ENCODE measurements at regions of chr7 and their contacts with region 1.

Region 1: DNA sequence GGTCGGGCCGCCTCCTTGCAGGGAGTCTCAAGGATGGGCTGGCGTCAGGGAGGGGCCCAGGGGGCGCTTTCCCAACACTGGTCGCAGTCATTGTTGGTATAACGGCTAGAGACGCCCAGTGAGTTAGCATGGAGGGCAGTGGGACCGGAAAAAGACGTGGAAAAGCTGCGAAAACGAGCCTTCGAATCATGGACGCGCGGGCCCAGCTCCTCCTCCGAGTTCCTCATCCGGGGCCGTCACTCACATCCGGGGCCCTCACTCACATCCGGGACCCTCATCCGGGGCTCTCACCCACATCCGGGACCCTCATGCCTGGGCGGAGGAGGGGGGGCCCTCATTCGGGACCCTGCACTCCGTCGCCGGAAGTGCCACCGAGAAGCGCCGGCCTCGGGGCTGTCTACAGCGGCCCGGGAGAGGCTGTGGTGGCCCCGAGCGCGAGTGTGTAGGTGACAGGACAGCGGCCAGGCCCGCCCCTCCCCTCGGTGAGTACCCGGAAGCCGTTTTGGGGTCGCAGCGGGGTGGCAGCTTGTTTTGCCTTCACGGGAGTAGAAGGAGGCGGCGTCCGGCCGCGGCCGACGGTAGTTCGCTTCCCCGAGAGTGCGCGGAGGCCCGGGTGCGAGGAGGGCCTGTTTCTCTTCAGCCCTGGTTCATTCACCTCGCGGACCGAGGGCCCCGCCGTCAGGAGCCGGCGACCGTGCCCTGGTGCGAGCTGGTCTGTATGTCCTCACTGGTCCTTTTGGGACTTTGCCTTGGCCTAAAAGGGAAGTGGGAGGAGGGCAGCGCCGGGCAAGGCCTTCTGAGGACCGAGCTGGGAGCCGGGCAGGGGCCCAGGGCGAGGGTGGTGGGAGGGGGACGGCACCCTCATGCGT is at the start of gene ZNF655:
- DNase-seq: peak; percentile 98
- H3K4me3 ChIP-seq: peak within 1 kb of the TSS; percentile 98
- H3K27ac ChIP-seq: peak within 1 kb of the TSS; percentile 97
- H3K4me1 ChIP-seq: peaks cover 3% of the 10 kb centered on the region
- H3K27me3 ChIP-seq: no peaks in the 10 kb centered on the region
- CTCF ChIP-seq: no peak
- total RNA-seq, gene ZNF655: 59.3 and 60.6 TPM in 2 replicates

Region 2: DNA sequence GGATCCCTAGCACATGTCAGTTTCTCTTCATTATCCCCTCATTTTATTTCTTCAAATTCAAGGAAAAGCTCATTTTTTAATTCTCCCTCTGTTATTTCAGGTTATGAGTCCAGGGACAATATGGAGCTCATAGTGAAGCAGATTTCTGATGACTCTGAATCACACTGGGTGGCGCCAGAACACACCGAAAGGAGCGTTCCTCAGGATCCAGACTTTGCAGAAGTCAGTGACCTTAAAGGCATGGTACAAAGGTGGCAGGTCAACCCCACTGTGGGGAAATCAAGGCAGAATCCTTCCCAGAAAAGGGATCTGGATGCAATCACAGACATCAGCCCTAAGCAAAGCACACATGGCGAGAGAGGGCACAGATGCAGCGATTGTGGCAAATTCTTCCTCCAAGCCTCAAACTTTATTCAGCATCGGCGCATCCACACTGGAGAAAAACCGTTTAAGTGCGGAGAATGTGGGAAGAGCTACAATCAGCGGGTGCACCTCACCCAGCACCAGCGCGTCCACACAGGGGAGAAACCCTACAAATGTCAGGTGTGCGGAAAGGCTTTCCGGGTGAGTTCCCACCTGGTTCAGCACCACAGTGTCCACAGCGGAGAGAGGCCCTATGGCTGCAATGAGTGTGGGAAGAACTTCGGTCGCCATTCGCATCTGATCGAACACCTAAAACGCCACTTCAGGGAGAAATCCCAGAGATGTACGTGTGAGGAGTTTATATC is 32.7 kb before region 1 on chr7:
- CTCF ChIA-PET with region 1: interaction called, 14 read pairs
- POLR2A ChIA-PET with region 1: no interaction called
- intact Hi-C with region 1: no loop called
- DNase-seq: no peak
- H3K4me3 ChIP-seq: no peak overlapping the region
- H3K27ac ChIP-seq: no peak overlapping the region
- H3K4me1 ChIP-seq: no peaks in the 10 kb centered on the region
- H3K27me3 ChIP-seq: no peaks in the 10 kb centered on the region
- CTCF ChIP-seq: peak; percentile 46

Region 3: DNA sequence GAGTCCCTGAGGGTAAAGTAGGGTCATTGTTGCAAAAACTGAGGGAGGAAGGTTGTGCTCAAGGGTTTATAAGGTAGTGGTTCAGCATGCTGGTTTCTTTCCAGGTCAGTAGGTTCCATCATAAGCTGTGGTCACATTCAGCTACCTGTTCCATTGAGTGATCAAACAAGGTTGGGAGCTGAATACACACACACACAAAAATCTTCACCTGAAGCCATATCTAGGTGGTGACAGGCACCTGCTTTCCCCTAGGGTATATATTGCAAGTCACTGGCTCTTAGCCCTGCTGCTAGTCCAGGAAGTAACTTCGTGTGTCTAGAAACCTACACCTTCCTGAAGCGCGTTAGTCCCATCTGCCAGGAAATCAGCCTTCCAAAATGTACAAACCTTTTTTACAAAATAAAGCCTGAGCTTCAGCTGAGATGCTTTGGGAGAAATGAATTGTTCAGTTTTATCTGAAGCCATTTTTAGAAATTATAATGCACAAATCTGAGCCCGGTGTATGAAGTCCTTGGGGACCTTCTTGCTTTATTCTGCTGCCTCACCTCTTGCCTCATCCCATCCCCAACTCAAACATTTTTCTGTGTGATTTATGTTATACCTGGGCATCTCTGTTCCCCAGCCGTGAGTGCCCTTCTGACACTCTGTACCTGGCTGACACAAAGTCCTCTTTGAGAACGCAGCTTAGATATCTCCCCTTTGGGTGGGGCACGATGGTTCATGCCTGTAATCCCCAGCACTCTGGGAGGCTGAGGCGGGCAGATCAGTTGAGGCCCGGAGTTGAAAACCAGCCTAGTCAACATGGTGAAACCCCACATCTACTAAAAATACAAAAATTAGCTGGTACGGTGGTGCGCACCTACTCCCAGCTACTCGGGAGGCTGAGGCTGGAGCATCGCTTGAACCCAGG is 579.6 kb after region 1 on chr7:
- CTCF ChIA-PET with region 1: no interaction called
- POLR2A ChIA-PET with region 1: no interaction called
- intact Hi-C with region 1: no loop called
- DNase-seq: no peak
- H3K4me3 ChIP-seq: no peak overlapping the region
- H3K27ac ChIP-seq: no peak overlapping the region
- H3K4me1 ChIP-seq: no peaks in the 10 kb centered on the region
- H3K27me3 ChIP-seq: no peaks in the 10 kb centered on the region
- CTCF ChIP-seq: no peak

Measured in A673 (cell line).